ENCODE measurements at regions of chrX and their contacts with region 1.

Region 1: DNA sequence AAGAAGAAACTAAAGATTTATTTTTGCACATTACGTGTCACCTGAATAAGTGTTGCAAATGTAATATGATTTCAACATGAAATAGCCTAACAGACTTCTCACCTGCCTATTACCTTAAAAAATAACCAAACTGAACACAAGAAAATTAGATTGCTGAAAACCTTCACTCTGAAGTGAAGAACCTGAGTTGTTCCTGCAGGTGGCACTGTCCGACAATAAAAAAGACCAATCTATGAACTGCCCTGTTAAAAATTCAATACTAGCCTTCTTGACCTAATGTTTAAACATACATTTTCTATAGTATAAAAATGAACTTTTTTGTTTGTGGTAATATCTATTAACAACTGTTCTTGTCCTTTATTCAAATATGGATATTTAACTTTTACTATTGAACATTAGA is 69.2 kb upstream of the PNPLA4 start:
- DNase-seq: peak; percentile 40
- CTCF ChIP-seq: peak; percentile 69

Region 2: DNA sequence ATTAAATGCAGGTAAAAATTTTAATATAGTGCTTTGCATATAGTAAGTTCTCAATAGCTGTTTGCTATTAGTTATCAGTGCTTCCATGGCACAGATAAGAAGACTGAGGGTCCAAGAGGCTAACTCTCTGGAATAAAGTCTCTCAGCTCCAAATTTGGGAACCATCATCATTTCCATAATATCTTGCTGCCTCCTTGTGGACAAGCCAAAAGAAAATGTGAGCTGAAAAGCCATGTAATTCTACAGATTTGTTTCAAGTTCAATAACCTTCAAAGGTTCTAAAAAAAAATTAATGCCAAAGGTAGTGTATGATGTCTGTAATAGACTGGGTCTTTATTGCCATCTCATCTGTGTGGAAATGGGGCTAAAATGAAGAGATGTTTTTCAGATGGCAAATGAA is 290.4 kb before region 1 on chrX:
- in situ Hi-C with region 1: no loop called
- DNase-seq: no peak
- CTCF ChIP-seq: peak; percentile 20

Region 3: DNA sequence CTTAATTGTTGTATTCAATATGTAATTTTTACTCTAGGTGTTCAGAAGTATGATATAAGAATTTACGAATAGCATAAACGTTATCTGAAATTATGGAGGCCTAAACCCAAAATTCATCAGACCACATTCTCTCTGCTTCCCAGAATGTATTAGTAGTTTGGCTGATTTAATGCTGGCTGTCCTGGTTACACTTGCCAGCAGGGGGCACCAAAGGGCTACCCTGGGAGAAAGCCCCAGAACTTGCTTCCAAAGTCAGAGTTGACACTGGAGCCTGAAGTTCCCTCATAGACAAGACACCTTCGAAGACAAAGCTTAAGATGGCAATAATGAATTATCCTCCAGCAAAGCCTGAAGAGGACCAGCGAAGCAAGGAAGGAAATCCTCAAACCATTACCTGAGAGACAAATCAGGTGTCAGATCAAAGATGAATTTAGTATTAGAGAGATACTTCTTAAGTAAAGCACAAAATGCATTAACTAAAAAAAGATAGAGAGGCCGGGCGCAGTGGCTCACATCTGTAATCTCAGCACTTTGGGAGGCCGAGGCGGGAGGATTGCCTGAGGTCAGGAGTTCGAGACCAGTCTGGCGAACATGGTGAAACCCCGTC is 746.8 kb after region 1 on chrX:
- in situ Hi-C with region 1: loop called (anchors 25 kb)
- DNase-seq: peak; percentile 53
- CTCF ChIP-seq: peak; percentile 79

Measured in GM13977 (cell line).